ENCODE measurements at regions of chr1 and their contacts with region 1.

Region 1: GRCh38 chr1:27603681-27604578 is at the start of gene AHDC1:
- DNase-seq: peak; percentile 87
- ATAC-seq: peak; percentile 73
- H3K4me3 ChIP-seq: peak within 1 kb of the TSS; percentile 97
- H3K27ac ChIP-seq: peak within 1 kb of the TSS; percentile 92
- H3K4me1 ChIP-seq: peaks cover 18% of the 10 kb centered on the region
- H3K27me3 ChIP-seq: no peaks in the 10 kb centered on the region
- CTCF ChIP-seq: 0 out of 2 replicates have a peak, but pooled peaks have one; percentile 6
- POLR2A ChIP-seq: peak; percentile 85
- RAD21 ChIP-seq: peak; percentile 28; the same call in 1 of the 2 replicates
- total RNA-seq, gene AHDC1: 1.7 and 2.0 TPM in 2 replicates

Region 2: GRCh38 chr1:27135541-27136240 is 468.2 kb before region 1 on chr1:
- CTCF ChIA-PET with region 1: no interaction called
- POLR2A ChIA-PET with region 1: no interaction called
- dilution Hi-C with region 1: no loop called
- in situ Hi-C with region 1: no loop called
- intact Hi-C with region 1: no loop called
- DNase-seq: no peak
- ATAC-seq: no peak; the same call in 1 of the 2 replicates
- H3K4me3 ChIP-seq: no peak overlapping the region
- H3K27ac ChIP-seq: no peak overlapping the region
- H3K4me1 ChIP-seq: peaks cover 10% of the 10 kb centered on the region
- H3K27me3 ChIP-seq: no peaks in the 10 kb centered on the region
- CTCF ChIP-seq: 0 out of 2 replicates have a peak, but pooled peaks have one; percentile 3
- POLR2A ChIP-seq: no peak
- RAD21 ChIP-seq: 0 out of 2 replicates have a peak, but pooled peaks have one; percentile 3

Region 3: GRCh38 chr1:27300341-27301051 is 303.4 kb before region 1 on chr1:
- CTCF ChIA-PET with region 1: interaction called, 6 read pairs
- POLR2A ChIA-PET with region 1: no interaction called
- dilution Hi-C with region 1: no loop called
- in situ Hi-C with region 1: loop called (anchors 5 kb)
- intact Hi-C with region 1: loop called (anchors 1 kb)
- DNase-seq: peak; percentile 93
- ATAC-seq: peak; percentile 76
- H3K4me3 ChIP-seq: no peak overlapping the region
- H3K27ac ChIP-seq: peak overlapping the region; percentile 95
- H3K4me1 ChIP-seq: peaks cover 27% of the 10 kb centered on the region
- H3K27me3 ChIP-seq: no peaks in the 10 kb centered on the region
- CTCF ChIP-seq: peak; percentile 98
- POLR2A ChIP-seq: peak; percentile 49; the same call in 1 of the 2 replicates
- RAD21 ChIP-seq: peak; percentile 98

Region 4: DNA sequence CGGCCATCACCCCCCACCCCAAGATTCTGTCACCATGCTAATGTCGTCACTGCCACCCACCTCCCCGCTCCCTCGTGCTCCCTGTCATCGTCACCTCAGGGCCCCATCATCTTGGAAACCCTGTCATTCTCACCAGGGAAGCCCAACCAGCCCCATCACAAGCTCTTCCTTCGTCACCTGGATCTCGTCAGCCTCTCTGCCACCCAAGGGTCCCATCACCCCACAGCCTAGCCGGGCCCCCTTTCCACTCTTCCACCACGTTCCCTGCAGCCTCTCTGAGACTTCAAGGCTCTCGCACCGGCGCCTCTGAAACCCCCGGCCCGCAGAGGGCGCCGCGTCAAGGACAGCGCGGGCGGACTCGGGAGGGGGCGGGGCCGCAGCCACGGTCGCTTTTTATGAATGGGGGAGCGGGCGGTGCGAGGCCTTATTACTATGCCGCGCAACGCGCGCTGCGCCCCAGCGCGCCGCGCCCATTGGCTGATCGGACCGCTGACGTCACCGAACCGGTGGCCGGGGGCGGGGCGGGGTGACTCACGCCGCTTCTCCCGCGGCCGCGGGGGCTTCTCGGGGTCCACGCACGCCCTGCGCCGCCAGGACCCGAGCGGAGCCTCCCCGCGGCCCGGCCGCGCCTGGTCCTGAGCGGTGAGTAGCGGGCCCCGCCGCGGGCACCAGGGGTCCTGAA is 211.7 kb before region 1 on chr1 and contains the start of gene GPR3:
- CTCF ChIA-PET with region 1: interaction called, 3 read pairs
- POLR2A ChIA-PET with region 1: no interaction called
- dilution Hi-C with region 1: no loop called
- in situ Hi-C with region 1: loop called (anchors 5 kb)
- intact Hi-C with region 1: loop called (anchors 1 kb)
- DNase-seq: peak; percentile 91
- ATAC-seq: peak; percentile 92
- H3K4me3 ChIP-seq: peak within 1 kb of the TSS; percentile 63
- H3K27ac ChIP-seq: peak within 1 kb of the TSS; percentile 52; the same call in 1 of the 2 replicates
- H3K4me1 ChIP-seq: peaks cover 15% of the 10 kb centered on the region
- H3K27me3 ChIP-seq: no peaks in the 10 kb centered on the region
- CTCF ChIP-seq: peak; percentile 69
- POLR2A ChIP-seq: peak; percentile 84
- RAD21 ChIP-seq: peak; percentile 40
- total RNA-seq, gene GPR3: 0.72 and 0.83 TPM in 2 replicates

Region 5: GRCh38 chr1:27402349-27402754 is 201.6 kb before region 1 on chr1:
- CTCF ChIA-PET with region 1: no interaction called
- POLR2A ChIA-PET with region 1: no interaction called
- dilution Hi-C with region 1: no loop called
- in situ Hi-C with region 1: loop called (anchors 5 kb)
- intact Hi-C with region 1: loop called (anchors 1 kb)
- DNase-seq: peak; percentile 55
- ATAC-seq: peak; percentile 52
- H3K4me3 ChIP-seq: no peak overlapping the region
- H3K27ac ChIP-seq: no peak overlapping the region
- H3K4me1 ChIP-seq: peaks cover 19% of the 10 kb centered on the region
- H3K27me3 ChIP-seq: no peaks in the 10 kb centered on the region
- CTCF ChIP-seq: peak; percentile 60
- POLR2A ChIP-seq: no peak
- RAD21 ChIP-seq: peak; percentile 65

Region 6: DNA sequence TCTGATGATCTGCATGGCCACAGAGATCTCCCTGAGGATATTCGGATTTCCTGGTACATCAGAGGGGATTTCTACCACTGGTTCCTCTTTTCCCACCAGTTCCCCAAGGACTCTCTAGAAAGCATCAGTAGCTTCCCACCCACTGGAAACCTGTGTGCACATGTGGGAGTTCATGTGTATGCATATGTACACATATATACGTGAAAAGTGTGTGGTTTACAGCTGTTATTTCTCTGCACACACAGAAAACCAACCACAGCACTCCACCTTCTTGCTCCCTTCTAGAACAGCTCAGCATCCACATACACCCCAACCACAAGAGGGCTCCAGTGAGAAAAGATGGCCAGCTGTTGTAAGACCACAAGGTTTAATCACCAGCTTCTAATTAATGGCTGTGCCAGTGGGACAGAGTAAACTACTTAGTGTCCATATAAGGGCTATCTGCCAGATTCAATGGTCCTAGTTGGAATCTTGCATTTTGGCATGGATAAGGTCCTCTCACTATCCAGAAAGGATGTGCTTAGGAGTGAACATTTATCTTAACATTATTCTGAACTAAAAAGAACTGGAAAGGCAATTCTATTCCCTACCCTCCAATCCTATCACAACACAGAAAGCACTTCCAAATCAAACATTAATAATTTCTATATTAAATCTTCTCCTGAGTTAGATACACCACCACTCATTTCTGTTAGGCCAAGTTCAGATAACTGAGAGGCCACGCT is 187.4 kb before region 1 on chr1:
- CTCF ChIA-PET with region 1: interaction called, 5 read pairs
- POLR2A ChIA-PET with region 1: no interaction called
- dilution Hi-C with region 1: no loop called
- in situ Hi-C with region 1: no loop called
- intact Hi-C with region 1: loop called (anchors 1 kb)
- DNase-seq: peak; percentile 73
- ATAC-seq: peak; percentile 55
- H3K4me3 ChIP-seq: no peak overlapping the region
- H3K27ac ChIP-seq: no peak overlapping the region
- H3K4me1 ChIP-seq: peaks cover 11% of the 10 kb centered on the region
- H3K27me3 ChIP-seq: no peaks in the 10 kb centered on the region
- CTCF ChIP-seq: peak; percentile 65
- POLR2A ChIP-seq: no peak; the same call in 1 of the 2 replicates
- RAD21 ChIP-seq: peak; percentile 67

Region 7: GRCh38 chr1:27489910-27490741 is 113.8 kb before region 1 on chr1 and contains the start of gene WASF2:
- CTCF ChIA-PET with region 1: no interaction called
- POLR2A ChIA-PET with region 1: no interaction called
- dilution Hi-C with region 1: no loop called
- in situ Hi-C with region 1: no loop called
- intact Hi-C with region 1: loop called (anchors 5 kb)
- DNase-seq: peak; percentile 96
- ATAC-seq: peak; percentile 97
- H3K4me3 ChIP-seq: peak within 1 kb of the TSS; percentile 79
- H3K27ac ChIP-seq: peak within 1 kb of the TSS; percentile 90
- H3K4me1 ChIP-seq: peaks cover 6% of the 10 kb centered on the region
- H3K27me3 ChIP-seq: no peaks in the 10 kb centered on the region
- CTCF ChIP-seq: 0 out of 2 replicates have a peak, but pooled peaks have one; percentile 1
- POLR2A ChIP-seq: peak; percentile 86
- RAD21 ChIP-seq: no peak
- total RNA-seq, gene WASF2: 7.5 and 7.9 TPM in 2 replicates

Region 8: DNA sequence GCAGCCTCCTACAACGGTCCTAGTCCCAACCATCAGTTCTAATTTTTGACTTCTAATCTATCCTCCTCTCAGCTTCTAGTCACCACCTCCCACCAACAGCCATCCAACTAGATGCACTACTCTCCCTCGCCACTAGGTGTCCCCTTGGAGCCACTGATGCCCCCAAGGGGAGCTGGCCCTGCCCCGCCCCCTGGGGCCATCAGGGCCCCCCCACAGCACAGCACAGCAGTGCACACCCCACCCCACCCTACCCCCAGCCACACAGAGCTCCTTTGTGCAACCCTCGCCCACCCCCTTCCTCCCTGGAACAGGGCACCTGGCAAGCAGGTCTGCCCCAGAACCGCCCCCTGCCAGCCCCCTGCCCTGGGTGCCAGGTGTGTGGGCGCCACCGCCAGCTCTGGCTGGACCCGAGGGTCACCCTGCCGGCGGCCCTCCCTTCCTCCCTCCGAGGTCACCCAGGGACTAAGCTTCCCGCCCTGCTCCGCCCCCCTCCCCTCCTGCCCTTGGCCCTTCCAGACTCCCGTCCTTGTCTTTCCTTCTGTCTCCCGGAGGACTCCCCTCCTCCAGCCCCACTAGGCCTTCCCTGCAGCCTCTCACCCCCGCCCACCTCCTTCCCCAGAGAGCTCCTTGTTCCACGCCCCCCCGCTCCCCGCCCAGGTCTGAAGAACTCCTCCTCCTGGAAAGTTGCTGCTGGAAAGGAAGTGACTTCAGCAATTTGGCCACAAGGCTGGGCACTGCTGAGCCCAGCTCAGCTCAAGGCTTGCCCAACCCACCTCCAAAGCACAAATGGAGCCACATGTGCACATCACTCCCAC is 46.9 kb before region 1 on chr1:
- CTCF ChIA-PET with region 1: interaction called, 13 read pairs
- POLR2A ChIA-PET with region 1: interaction called, 5 read pairs
- dilution Hi-C with region 1: no loop called
- in situ Hi-C with region 1: no loop called
- intact Hi-C with region 1: loop called (anchors 1 kb)
- DNase-seq: peak; percentile 92
- ATAC-seq: peak; percentile 89
- H3K4me3 ChIP-seq: no peak overlapping the region
- H3K27ac ChIP-seq: peak overlapping the region; percentile 30
- H3K4me1 ChIP-seq: peaks cover 34% of the 10 kb centered on the region
- H3K27me3 ChIP-seq: no peaks in the 10 kb centered on the region
- CTCF ChIP-seq: peak; percentile 88
- POLR2A ChIP-seq: no peak
- RAD21 ChIP-seq: peak; percentile 88

Measured in IMR-90 (cell line).